Right ventricle myocardium superior (tissue), 1 donor: ENCODE measurements at regions of chr12 and their contacts with region 1.

Region 1: GRCh38 chr12:1939801-1940607 is 21.6 kb upstream of the CACNA2D4 start:
- DNase-seq: peak; percentile 93
- ATAC-seq: peak; percentile 85

Region 2: DNA sequence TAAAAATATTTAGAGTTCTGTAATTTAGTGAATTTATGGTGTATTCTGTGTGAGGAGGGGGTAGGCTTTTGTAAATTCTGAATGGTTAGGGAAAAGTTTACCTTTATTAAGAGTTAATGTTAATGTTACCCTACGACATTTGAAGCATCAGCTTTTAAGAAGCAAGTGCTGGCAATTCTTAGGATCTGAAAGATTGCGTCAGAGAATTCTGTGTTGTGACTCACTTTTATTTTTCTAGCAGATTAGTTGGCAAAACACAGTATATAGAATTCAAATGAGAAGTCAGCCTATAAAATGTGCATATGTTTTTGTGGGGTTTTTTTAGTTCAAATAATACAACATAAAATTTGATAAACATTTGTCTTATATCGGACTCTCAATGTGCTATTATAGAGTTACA is 1088.1 kb before region 1 on chr12:
- intact Hi-C with region 1: no loop called
- DNase-seq: no peak
- ATAC-seq: peak; percentile 44

Region 3: GRCh38 chr12:1650260-1650977 is 289.6 kb before region 1 on chr12:
- intact Hi-C with region 1: loop called (anchors 5 kb)
- DNase-seq: no peak
- ATAC-seq: peak; percentile 87

Region 4: DNA sequence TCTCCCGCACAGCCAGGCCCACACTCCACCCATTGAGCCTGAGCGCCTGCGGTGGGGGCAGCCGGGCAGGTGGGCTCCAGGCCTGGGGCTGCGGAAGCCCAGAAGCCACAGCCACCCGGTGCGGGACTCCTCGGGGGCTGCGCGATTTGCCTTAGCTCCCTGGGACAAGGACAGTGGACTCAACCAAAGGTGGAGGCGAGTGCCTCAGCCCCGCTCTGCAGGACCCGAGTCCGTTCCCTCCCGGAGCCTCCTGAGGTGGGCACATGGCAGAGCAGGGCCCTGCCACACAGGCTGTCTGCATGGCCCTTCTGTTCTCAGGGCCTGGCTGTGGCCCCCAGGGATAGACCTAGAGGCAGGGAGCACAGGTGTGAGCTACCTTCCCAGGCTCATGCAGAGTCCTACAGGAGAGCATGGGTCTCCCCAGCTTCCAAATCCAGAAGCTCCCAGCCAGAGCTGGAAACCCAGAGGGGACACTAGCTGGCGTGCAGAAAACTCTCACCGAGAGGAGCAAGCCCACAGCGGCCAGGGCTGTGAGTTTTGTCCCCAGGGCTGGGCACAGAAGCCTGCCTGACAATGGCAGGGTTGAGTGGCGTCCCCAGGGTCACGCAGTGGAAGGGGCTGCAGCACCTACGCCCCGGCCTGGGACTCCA is 141.9 kb before region 1 on chr12:
- intact Hi-C with region 1: loop called (anchors 2 kb)
- DNase-seq: no peak
- ATAC-seq: no peak